B cell (primary cell): ENCODE measurements at regions of chr7 and their contacts with region 1.

Region 1: DNA sequence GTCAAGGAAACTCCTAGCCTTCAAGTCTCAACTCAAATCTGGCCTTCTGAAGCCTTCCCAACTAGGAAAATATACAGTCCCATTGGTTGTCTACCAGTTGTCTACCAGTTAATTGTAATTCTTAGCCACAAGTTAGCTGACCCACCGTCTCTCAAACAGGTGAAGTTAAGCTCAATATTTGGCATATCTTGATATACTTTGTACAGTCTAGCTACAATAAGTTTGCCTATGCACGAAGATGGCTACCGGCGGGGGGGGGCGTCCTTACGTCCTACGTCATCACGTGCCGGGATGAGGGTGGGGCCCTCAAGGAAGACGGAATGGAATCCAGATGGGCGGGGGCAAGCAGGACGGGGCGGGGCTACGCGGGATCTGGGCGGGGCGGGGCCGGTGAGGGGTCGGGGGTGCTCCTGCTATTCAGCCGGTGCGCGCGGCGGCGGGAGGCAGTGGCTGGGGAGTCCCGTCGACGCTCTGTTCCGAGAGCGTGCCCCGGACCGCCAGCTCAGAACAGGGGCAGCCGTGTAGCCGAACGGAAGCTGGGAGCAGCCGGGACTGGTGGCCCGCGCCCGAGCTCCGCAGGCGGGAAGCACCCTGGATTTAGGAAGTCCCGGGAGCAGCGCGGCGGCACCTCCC is at the start of gene AHR:
- DNase-seq: peak; percentile 93
- ATAC-seq: peak; percentile 79
- H3K4me3 ChIP-seq: peak within 1 kb of the TSS; percentile 66 to 88 (median 77)
- H3K4me3 Mint-ChIP-seq: peak within 1 kb of the TSS; percentile 86
- H3K27ac ChIP-seq: peak within 1 kb of the TSS; percentile 74 to 92
- H3K27ac Mint-ChIP-seq: peak within 1 kb of the TSS; percentile 95
- H3K4me1 ChIP-seq: peaks cover 22 to 28% of the 10 kb centered on the region in 2 donors
- H3K4me1 Mint-ChIP-seq: peaks cover 32% of the 10 kb centered on the region
- H3K27me3 ChIP-seq: no peaks in the 10 kb centered on the region
- H3K27me3 Mint-ChIP-seq: no peaks in the 10 kb centered on the region
- CTCF ChIP-seq: no peak
- total RNA-seq, gene AHR: 11.2 and 13.8 TPM in 2 replicates

Region 2: DNA sequence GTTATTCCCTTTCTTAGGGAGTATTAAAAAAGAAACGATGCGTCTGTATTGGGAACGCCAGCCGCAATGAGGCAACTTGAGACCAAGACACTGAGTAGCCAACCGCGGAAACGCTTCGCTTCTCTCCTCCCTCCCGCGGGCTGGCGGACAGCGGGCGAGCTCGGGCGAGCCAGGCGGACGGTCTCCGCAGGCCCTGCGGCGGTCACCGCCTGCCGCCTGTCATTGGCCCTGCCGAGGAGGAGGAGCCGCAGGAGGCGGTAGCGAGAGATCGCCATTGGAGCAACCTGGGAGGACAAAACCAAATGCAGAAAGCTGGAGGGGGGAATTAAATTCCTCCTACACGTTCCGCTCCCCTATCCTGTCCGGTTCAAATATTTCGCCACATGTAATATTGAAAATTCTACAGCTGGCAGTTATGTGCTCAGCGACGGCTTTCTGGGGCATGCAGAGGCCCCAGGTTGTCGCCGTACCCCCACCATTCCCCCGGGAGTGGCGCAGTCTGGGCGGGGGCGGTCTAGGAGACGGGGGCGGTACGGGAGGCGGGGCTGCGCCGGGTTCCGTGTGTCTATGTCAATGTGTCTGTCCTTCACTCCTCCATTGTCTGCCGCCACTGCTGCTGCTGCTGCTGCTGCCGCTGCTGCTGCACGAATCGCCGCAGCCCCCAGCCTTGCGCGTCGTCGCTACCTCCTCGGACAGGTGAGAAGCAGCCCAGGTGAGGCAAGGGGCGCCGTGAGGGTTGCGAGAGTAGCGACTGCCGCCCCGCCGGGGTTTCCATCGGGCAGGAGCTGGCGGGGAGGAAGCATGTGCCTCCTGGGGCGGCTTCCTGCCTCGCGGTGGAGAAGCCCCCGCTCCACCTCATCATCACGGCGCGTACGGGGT is 652.5 kb before region 1 on chr7 and contains the starts of genes ANKMY2 and BZW2:
- CTCF ChIA-PET with region 1: no interaction called
- POLR2A ChIA-PET with region 1: no interaction called
- intact Hi-C with region 1: loop called (anchors 2 kb)
- DNase-seq: peak; percentile 96
- ATAC-seq: peak; percentile 86
- H3K4me3 ChIP-seq: peak within 1 kb of the TSS; percentile 75 to 99 (median 91)
- H3K4me3 Mint-ChIP-seq: peak within 1 kb of the TSS; percentile 99
- H3K27ac ChIP-seq: peak within 1 kb of the TSS; percentile 84 to 89
- H3K27ac Mint-ChIP-seq: peak within 1 kb of the TSS; percentile 99
- H3K4me1 ChIP-seq: peaks cover 20 to 26% of the 10 kb centered on the region in 2 donors
- H3K4me1 Mint-ChIP-seq: peaks cover 61% of the 10 kb centered on the region
- H3K27me3 ChIP-seq: no peaks in the 10 kb centered on the region
- H3K27me3 Mint-ChIP-seq: no peaks in the 10 kb centered on the region
- CTCF ChIP-seq: no peak
- total RNA-seq, gene ANKMY2: 17.8 and 18.2 TPM in 2 replicates
- total RNA-seq, gene BZW2: 17.0 and 18.4 TPM in 2 replicates

Region 3: DNA sequence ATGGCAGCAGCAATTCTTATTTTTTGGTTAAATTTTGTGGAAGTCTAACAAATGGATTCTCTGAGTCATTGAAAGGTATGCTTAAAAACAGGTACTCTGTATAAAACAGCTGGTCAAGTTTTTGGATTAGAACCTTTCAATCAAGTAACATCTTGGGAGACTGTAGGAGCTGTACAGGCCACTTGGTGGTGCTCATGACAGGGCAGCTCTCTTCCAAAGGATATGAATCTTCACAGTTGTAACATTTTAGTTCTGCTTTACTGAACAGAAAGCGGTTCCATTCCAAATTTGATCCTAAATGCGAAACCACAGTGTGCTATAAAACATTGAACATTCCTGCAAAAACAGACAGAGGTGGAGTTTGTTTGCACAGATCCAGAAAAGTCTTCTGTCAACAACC is 372.0 kb before region 1 on chr7:
- CTCF ChIA-PET with region 1: interaction called, 3 read pairs
- POLR2A ChIA-PET with region 1: interaction called, 3 read pairs
- intact Hi-C with region 1: loop called (anchors 5 kb)
- DNase-seq: peak; percentile 41
- ATAC-seq: peak; percentile 44
- H3K4me3 ChIP-seq: no peak overlapping the region
- H3K4me3 Mint-ChIP-seq: no peak overlapping the region
- H3K27ac ChIP-seq: no peak overlapping the region
- H3K27ac Mint-ChIP-seq: no peak overlapping the region
- H3K4me1 ChIP-seq: peaks cover 24 to 34% of the 10 kb centered on the region in 2 donors
- H3K4me1 Mint-ChIP-seq: peaks cover 42% of the 10 kb centered on the region
- H3K27me3 ChIP-seq: peaks cover 0 to 19% (median 1%) of the 10 kb centered on the region in 4 experiments
- H3K27me3 Mint-ChIP-seq: peaks cover 15% of the 10 kb centered on the region
- CTCF ChIP-seq: peak; percentile 47

Region 4: DNA sequence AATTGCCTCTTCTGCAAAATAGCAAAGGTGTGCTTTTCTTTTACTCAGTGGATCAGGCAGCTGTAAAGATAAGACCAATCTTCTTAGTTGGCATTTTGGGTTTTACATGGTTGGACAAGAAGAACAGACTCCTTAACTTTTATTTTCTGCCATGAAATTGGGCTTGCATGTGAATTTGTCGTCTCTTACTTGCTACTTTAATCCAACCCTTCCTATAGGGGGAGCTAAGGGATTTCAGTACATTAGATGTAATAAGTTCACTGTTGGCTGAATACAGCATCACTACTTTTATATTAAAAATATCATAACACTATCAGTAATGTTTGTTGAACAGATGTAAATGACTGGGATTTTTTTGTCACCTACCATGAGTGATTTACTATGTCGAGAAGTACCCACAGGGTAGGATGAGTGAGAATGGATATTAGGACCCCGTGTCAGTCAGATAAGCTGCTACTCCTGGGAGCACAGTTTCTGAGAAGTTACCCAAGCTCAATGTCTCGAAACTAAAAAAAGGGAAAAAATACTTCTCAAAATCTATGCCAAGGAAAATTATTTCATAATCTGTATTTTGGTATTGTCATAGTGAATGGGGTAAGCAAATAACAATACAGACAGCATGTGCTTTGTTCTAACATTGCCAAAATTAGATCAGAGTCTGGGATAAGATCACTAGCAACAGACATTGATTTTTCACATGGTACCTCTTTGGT is 289.2 kb before region 1 on chr7:
- CTCF ChIA-PET with region 1: interaction called, 11 read pairs
- POLR2A ChIA-PET with region 1: interaction called, 3 read pairs
- intact Hi-C with region 1: no loop called
- DNase-seq: peak; percentile 10
- ATAC-seq: no peak
- H3K4me3 ChIP-seq: no peak overlapping the region
- H3K4me3 Mint-ChIP-seq: no peak overlapping the region
- H3K27ac ChIP-seq: no peak overlapping the region
- H3K27ac Mint-ChIP-seq: no peak overlapping the region
- H3K4me1 ChIP-seq: peaks cover 0 to 2% of the 10 kb centered on the region in 2 donors
- H3K4me1 Mint-ChIP-seq: peaks cover 6% of the 10 kb centered on the region
- H3K27me3 ChIP-seq: no peaks in the 10 kb centered on the region
- H3K27me3 Mint-ChIP-seq: no peaks in the 10 kb centered on the region
- CTCF ChIP-seq: peak; percentile 18

Region 5: GRCh38 chr7:17234398-17235031 is 63.8 kb before region 1 on chr7:
- CTCF ChIA-PET with region 1: no interaction called
- POLR2A ChIA-PET with region 1: no interaction called
- intact Hi-C with region 1: loop called (anchors 1 kb)
- DNase-seq: peak; percentile 75
- ATAC-seq: peak; percentile 85
- H3K4me3 ChIP-seq: peak overlapping the region in 2 of 5 experiments; percentile 16 to 50
- H3K4me3 Mint-ChIP-seq: peak overlapping the region; percentile 79
- H3K27ac ChIP-seq: peak overlapping the region; percentile 57 to 66
- H3K27ac Mint-ChIP-seq: peak overlapping the region; percentile 97
- H3K4me1 ChIP-seq: peaks cover 17 to 19% of the 10 kb centered on the region in 2 donors
- H3K4me1 Mint-ChIP-seq: peaks cover 21% of the 10 kb centered on the region
- H3K27me3 ChIP-seq: no peaks in the 10 kb centered on the region
- H3K27me3 Mint-ChIP-seq: no peaks in the 10 kb centered on the region
- CTCF ChIP-seq: no peak

Region 6: GRCh38 chr7:17362439-17363105 is 64.2 kb after region 1 on chr7:
- CTCF ChIA-PET with region 1: no interaction called
- POLR2A ChIA-PET with region 1: no interaction called
- intact Hi-C with region 1: no loop called
- DNase-seq: no peak
- ATAC-seq: no peak
- H3K4me3 ChIP-seq: no peak overlapping the region
- H3K4me3 Mint-ChIP-seq: no peak overlapping the region
- H3K27ac ChIP-seq: no peak overlapping the region
- H3K27ac Mint-ChIP-seq: no peak overlapping the region
- H3K4me1 ChIP-seq: no peaks in the 10 kb centered on the region
- H3K4me1 Mint-ChIP-seq: no peaks in the 10 kb centered on the region
- H3K27me3 ChIP-seq: no peaks in the 10 kb centered on the region
- H3K27me3 Mint-ChIP-seq: no peaks in the 10 kb centered on the region
- CTCF ChIP-seq: no peak

Region 7: DNA sequence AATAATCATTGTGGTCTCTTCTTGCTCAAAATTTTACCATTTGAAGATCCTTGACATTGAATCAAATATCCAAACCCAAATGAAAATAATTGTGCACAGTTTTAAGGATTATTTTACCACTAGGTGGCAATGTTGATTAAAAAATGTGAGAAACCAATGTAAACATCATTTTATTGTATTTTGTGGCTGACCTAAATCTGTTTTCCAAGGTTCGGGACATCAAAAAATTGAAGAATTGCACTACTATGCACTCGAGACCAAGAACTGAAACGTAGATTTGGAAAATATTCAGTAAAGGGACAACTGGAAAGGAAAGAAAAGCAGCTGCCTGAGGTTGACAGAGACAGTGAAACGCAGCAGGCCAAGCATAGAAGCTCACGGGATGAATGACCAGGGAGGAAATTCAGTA is 382.6 kb after region 1 on chr7:
- CTCF ChIA-PET with region 1: interaction called, 3 read pairs
- POLR2A ChIA-PET with region 1: no interaction called
- intact Hi-C with region 1: loop called (anchors 5 kb)
- DNase-seq: peak; percentile 41
- ATAC-seq: no peak
- H3K4me3 ChIP-seq: no peak overlapping the region
- H3K4me3 Mint-ChIP-seq: no peak overlapping the region
- H3K27ac ChIP-seq: no peak overlapping the region
- H3K27ac Mint-ChIP-seq: no peak overlapping the region
- H3K4me1 ChIP-seq: no peaks in the 10 kb centered on the region
- H3K4me1 Mint-ChIP-seq: no peaks in the 10 kb centered on the region
- H3K27me3 ChIP-seq: no peaks in the 10 kb centered on the region
- H3K27me3 Mint-ChIP-seq: no peaks in the 10 kb centered on the region
- CTCF ChIP-seq: peak; percentile 84